GM18951 (cell line): ENCODE measurements at regions of chr14 and their contacts with region 1.

Region 1: DNA sequence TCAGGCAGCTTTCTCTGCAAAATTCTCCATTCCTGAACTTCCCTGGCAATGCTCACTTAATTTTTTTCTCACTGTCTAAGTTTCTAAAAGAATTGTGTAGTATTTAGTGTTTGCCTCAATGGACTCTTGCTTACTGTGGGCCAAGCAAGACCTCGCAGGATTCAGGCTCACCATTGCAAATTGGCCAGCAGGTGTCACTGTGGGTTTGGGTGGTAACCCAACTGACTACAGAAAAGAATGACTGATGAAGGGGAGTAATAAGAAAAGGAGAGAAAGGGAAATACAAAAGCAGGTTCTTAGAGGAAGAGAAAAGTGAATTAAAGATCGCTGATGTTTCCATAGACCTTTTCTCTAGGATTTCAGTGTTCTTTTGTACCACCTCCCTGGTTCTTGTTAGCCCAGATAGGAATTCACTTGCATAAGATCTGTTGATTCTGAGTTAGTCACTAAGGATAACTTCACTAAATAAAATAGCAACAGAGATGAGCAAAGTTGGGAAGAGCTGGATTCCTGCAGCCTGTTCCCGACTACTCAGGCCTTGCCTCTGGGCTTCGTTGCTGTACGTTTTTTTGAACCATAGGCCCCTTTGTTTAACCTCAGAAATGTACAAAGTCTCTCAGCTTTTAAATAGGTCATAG is 386.5 kb upstream of the DDHD1 start:
- POLR2A ChIP-seq: no peak

Region 2: DNA sequence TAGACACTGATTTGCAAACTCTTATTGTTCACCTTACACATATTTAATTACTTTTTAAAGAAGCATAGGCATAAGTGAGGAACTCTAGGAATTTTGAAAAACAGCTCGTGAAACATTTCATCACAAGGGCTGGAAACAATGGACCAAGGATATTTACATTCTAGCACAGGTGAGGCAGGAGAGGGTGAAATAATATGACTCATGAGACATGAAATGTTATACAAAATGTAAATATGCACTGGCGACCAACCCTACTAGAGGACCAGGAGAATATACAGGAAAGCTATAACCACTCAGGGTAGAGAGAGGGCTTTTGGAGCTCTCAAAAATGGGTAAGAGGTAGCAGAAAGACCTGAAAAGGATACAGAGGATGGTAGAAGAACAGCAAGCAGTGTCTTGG is 1110.2 kb before region 1 on chr14:
- in situ Hi-C with region 1: no loop called
- POLR2A ChIP-seq: no peak

Region 3: DNA sequence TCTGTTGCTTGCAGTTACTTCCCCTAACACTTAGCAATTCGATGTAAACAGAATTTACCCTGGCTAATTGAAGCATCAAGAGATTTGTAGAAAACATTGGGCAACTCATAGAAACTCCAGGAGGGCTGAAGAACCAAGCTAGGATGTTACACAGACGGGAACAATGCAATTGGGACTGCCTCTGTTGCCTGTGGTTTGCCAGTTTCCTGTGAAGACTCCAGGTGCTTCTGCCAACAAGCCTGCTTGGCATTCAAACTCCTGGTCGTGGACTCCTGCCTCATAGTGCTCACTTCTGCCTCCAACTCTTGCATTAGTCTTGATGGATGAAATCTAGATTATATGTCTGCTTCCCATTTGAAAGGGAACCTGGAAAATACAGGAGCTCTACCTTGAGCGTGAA is 171.0 kb after region 1 on chr14:
- in situ Hi-C with region 1: no loop called
- POLR2A ChIP-seq: no peak

Region 4: GRCh38 chr14:54169254-54169924 is 629.8 kb after region 1 on chr14:
- in situ Hi-C with region 1: loop called (anchors 25 kb)
- POLR2A ChIP-seq: no peak

Region 5: DNA sequence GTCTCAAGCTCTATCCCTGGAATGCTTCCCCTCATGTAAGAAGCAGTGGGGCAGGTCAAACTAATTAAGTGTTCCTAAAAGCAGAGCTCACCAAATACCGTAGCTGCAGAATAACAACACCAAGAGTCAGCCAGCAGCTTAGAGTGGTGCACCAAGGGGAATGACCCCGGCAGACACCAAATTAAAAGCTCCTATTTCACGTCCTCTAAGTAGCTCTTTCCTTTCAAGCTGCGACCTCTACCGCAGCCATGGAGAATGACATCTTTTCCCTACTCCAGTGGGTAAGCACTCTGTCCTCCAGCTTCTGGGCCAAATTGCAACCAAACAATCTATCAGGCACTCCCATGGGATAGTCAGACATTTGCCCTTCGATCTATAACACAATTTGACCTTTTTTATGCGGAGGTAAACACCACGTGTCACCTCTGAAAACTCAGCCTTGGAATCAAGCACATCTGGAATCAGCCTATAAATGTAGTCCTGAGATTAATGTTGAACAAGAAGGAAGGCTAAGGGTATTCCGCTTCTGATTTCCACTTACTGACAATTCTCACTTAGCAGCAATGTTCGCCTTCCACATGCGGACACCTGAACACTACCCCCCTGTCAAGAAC is 789.6 kb after region 1 on chr14:
- in situ Hi-C with region 1: loop called (anchors 25 kb)
- POLR2A ChIP-seq: no peak